Endothelial cell of umbilical vein (primary cell): ENCODE measurements at regions of chr1 and their contacts with region 1.

Region 1: GRCh38 chr1:23959041-23959460 is 577 bp upstream of the PNRC2 start:
- DNase-seq: peak; percentile 93
- H3K4me3 ChIP-seq: peak overlapping the region; percentile 43 to 67 (median 58)
- H3K27ac ChIP-seq: peak overlapping the region; percentile 96
- H3K4me1 ChIP-seq: peaks cover 26% of the 10 kb centered on the region
- H3K27me3 ChIP-seq: no peaks in the 10 kb centered on the region
- CTCF ChIP-seq: peak; percentile 17 to 38
- POLR2A ChIP-seq: peak; percentile 13

Region 2: DNA sequence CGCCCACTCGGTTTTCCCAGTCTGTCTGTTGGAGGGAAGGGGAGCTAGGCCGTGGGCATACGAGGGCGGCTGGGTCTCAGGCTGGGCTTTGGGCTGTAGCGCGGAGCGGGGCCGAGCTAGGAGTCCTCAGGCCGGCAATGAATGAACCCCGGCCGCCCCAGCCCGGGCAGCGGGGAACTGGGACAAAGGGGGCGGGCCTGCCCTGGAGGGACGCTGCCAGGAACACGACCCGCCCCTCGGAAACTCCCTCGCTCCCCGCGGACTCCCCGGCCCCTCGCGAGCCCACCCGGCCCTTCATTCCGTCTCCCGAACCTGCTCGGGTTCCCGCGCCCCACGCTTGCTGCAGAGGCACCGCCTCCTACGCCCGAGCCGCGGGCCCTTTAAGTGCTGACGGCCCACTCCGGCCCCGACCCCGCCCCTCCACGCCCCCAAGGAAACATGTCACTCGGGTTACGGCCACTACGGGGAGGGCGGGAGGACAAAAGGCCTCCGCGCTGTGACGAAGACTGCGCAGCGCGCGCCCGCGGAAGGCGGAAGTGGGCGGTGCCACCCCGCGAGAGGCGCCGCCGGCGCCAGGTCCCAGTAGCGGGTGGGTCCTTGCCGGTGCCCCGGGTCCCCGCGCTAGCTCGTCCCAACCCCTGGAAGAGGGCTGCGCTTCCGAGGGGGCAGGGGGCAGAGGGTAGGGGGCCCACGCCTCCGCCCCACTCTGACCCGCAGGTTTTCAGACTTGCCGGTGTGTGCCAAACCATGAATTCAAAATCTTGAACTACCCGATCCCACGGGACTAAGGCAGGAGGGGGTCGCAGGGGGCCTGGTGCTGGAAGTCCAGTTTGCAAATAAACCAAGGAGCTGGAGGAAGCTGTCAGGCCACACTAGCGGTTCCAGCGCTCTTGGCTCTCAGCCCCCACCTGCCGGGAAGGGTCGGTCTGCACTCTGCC is 158.4 kb before region 1 on chr1 and contains the start of gene GALE:
- CTCF ChIA-PET with region 1: no interaction called
- POLR2A ChIA-PET with region 1: no interaction called
- dilution Hi-C with region 1: no loop called
- intact Hi-C with region 1: loop called (anchors 2 kb)
- DNase-seq: peak; percentile 95
- H3K4me3 ChIP-seq: peak within 1 kb of the TSS; percentile 45 to 83 (median 73)
- H3K27ac ChIP-seq: peak within 1 kb of the TSS; percentile 62
- H3K4me1 ChIP-seq: peaks cover 15% of the 10 kb centered on the region
- H3K27me3 ChIP-seq: no peaks in the 10 kb centered on the region
- CTCF ChIP-seq: no peak
- POLR2A ChIP-seq: peak; percentile 61
- total RNA-seq, gene GALE: 39.2 and 42.9 TPM in 2 replicates

Region 3: GRCh38 chr1:23867953-23868556 is 91.0 kb before region 1 on chr1 and contains the start of gene FUCA1:
- CTCF ChIA-PET with region 1: no interaction called
- POLR2A ChIA-PET with region 1: no interaction called
- dilution Hi-C with region 1: no loop called
- intact Hi-C with region 1: loop called (anchors 1 kb)
- DNase-seq: peak; percentile 90
- H3K4me3 ChIP-seq: peak within 1 kb of the TSS; percentile 49 to 61 (median 52)
- H3K27ac ChIP-seq: no peak within 1 kb of the TSS
- H3K4me1 ChIP-seq: peaks cover 4% of the 10 kb centered on the region
- H3K27me3 ChIP-seq: peaks cover 4 to 10% of the 10 kb centered on the region in 2 experiments
- CTCF ChIP-seq: peak; percentile 91 to 95
- POLR2A ChIP-seq: no peak
- total RNA-seq, gene FUCA1: 4.3 and 4.9 TPM in 2 replicates

Region 4: DNA sequence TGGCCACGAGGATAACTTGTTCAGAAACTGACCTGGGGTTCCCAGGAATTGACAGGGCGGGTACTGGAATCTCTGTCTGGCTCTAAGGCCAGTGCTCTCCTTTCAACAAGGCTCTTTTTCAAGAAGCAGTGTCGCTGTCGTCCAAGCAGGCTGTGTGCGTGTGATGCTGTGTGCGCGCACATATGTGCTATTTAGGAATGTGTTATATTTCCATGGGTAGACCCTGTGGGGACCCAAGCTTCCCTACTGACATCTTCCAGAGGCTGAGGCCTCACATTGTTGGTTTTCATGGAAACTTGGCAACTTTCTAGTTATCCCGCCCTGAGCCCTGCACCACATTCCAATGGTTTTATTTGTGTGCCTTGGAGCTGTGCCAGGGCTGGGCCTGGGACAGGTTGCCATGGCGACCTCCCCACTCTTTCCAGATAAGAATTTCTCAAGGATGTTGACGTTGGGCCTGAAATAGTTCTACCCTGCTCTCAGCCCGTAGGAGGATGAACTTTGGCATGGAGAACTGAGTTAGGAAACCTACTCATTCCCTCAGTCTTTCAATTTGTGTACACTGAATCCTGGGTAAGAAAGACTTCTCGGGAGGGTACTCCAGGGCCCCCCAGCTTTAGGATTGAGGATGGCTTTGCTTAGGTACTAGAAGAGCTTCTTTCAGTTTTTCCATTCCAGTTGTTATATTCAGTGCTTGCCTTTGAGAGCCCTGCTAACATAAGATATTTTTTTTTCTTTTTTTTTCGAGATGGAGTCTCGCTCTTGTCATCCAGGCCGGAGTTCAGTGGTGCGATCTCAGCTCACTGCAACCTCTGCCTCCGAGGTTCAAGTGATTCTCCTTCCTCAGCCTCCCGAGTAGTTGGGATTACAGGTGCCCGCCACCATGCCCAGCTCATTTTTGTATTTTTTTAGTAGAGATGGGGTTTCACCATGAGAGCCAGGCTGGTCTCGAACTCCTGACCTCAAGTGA is 59.8 kb after region 1 on chr1:
- CTCF ChIA-PET with region 1: interaction called, 7 read pairs
- POLR2A ChIA-PET with region 1: interaction called, 3 read pairs
- dilution Hi-C with region 1: no loop called
- intact Hi-C with region 1: loop called (anchors 1 kb)
- DNase-seq: peak; percentile 100
- H3K4me3 ChIP-seq: no peak overlapping the region
- H3K27ac ChIP-seq: peak overlapping the region; percentile 78
- H3K4me1 ChIP-seq: peaks cover 6% of the 10 kb centered on the region
- H3K27me3 ChIP-seq: no peaks in the 10 kb centered on the region
- CTCF ChIP-seq: no peak
- POLR2A ChIP-seq: no peak

Region 5: DNA sequence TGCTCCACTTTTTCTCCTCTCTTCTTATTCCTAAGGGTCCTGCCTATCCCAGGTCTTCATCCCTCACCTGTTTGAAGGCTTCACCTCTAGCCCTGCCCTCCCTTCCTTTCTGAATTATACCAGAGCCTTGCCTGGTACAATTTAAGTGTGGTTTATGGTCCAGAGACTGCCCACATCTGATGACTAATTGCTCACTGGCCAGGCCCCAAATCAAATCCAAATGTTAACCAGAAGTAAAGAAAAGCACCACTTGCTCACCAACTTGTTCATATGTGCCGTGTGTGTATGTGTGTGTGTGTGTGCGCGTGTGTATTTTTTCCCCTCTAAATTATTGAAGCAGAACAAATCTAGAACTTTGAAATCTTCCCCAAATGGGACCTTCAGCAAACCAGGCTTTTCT is 126.5 kb after region 1 on chr1:
- CTCF ChIA-PET with region 1: no interaction called
- POLR2A ChIA-PET with region 1: no interaction called
- dilution Hi-C with region 1: no loop called
- intact Hi-C with region 1: no loop called
- DNase-seq: no peak
- H3K4me3 ChIP-seq: no peak overlapping the region
- H3K27ac ChIP-seq: no peak overlapping the region
- H3K4me1 ChIP-seq: no peaks in the 10 kb centered on the region
- H3K27me3 ChIP-seq: peaks cover 0 to 2% of the 10 kb centered on the region in 2 experiments
- CTCF ChIP-seq: no peak
- POLR2A ChIP-seq: no peak

Region 6: DNA sequence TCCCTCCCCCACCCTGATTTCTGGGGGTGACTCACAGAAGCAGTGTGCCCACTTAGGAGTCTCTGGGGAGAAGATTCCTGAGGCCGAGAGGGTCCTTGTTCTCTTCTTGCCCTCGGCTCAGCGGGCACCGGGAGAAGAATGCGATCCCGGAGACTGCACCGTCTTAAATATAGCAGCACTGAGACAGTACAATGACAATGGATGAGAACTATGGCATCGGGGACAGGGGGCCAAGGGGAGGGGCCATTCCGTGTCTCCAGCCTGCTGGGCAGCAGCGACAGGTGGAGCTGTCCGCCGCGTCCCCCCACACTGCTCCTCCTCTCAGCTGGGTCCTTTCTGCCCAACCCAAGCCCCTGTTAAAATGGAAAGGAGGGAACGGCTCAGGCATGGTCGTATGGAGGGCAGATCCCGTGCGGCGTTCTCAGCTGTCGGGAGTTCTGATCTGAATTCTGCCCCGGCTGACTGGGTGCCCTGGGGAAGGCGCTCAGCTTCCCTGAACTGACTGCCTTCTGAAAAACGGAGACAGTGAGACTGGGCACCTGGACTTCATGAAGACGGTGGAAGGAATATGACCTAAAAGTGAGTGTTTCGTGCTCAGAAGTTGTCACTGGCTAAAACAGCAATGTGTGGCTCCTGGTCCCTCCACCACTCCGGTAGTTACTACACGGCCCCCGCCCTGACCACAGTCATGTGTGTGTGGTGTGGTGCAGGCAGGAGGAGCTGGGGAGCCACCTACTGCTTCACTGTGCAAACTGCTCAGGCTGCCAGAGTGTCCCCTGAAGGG is 153.1 kb after region 1 on chr1 and contains the start of gene MYOM3:
- CTCF ChIA-PET with region 1: no interaction called
- POLR2A ChIA-PET with region 1: no interaction called
- dilution Hi-C with region 1: no loop called
- intact Hi-C with region 1: loop called (anchors 5 kb)
- DNase-seq: peak; percentile 63
- H3K4me3 ChIP-seq: no peak within 1 kb of the TSS
- H3K27ac ChIP-seq: no peak within 1 kb of the TSS
- H3K4me1 ChIP-seq: peaks cover 25% of the 10 kb centered on the region
- H3K27me3 ChIP-seq: peaks cover 0 to 2% of the 10 kb centered on the region in 2 experiments
- CTCF ChIP-seq: peak; percentile 32 to 60
- POLR2A ChIP-seq: no peak
- total RNA-seq, gene MYOM3: 0.18 and 0.40 TPM in 2 replicates

Region 7: GRCh38 chr1:24126018-24126671 is 167.1 kb after region 1 on chr1:
- CTCF ChIA-PET with region 1: no interaction called
- POLR2A ChIA-PET with region 1: no interaction called
- dilution Hi-C with region 1: no loop called
- intact Hi-C with region 1: no loop called
- DNase-seq: peak; percentile 14
- H3K4me3 ChIP-seq: no peak overlapping the region
- H3K27ac ChIP-seq: no peak overlapping the region
- H3K4me1 ChIP-seq: no peaks in the 10 kb centered on the region
- H3K27me3 ChIP-seq: no peaks in the 10 kb centered on the region
- CTCF ChIP-seq: no peak
- POLR2A ChIP-seq: no peak